Adrenal gland (tissue), 19 donors: ENCODE measurements at regions of chr7 and their contacts with region 1.

Region 1: GRCh38 chr7:101363734-101364374 is 1.2 kb downstream of the COL26A1 start:
- DNase-seq: peak; percentile 69 to 81 (median 75)
- H3K4me3 ChIP-seq: peak overlapping the region in 2 of 4 donors; percentile 43 to 70
- H3K27ac ChIP-seq: peak overlapping the region in 4 of 5 donors; percentile 47 to 70 (median 62)
- H3K4me1 ChIP-seq: peaks cover 0 to 12% of the 10 kb centered on the region in 2 donors
- H3K27me3 ChIP-seq: no peaks in the 10 kb centered on the region
- CTCF ChIP-seq: peak; percentile 66 to 96 (median 86)
- POLR2A ChIP-seq: peak in 1 of 2 donors; percentile 29

Region 2: DNA sequence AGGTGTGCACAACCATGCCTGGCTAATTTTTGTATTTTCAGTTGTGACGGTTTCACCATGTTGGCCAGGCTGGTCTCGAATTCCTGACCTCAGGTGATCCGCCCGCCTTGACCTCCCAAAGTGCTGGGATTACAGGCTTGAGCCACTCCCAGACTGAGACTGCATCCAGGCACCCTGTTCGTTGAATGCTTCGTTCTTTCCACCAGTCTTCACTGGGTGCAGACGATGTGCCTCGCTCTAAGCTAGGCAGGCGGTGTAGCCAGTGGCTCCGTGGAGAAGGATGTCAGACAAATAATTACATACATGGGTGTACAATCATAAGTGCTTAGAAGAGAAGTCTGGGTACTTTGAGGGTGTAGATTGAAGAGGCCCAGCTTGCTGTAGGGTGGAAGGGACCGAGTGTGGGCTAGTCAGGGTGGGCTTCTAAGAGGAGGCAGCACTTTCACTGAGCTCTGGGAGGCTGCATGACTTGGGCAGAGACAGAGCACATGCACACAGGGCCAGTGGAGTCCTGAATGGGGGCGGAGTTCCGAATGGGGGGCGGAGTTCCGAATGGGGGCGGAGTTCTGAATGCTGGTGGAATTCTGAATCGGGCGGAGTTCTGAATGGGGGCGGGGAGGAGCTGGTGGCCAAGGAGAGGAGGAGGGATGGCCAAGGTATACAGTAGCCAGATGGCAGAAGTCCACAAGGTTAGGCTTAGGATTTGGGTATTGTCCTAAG is 73.2 kb after region 1 on chr7:
- intact Hi-C with region 1: loop called in 1 of 2 experiments (anchors 5 kb)
- DNase-seq: peak; percentile 67 to 86 (median 73)
- H3K4me3 ChIP-seq: no peak overlapping the region
- H3K27ac ChIP-seq: no peak overlapping the region
- H3K4me1 ChIP-seq: no peaks in the 10 kb centered on the region
- H3K27me3 ChIP-seq: no peaks in the 10 kb centered on the region
- CTCF ChIP-seq: no peak
- POLR2A ChIP-seq: no peak

Region 3: GRCh38 chr7:101691822-101692384 is 328.0 kb after region 1 on chr7:
- intact Hi-C with region 1: no loop called
- DNase-seq: no peak
- H3K4me3 ChIP-seq: no peak overlapping the region
- H3K27ac ChIP-seq: no peak overlapping the region
- H3K4me1 ChIP-seq: peaks cover 8 to 11% of the 10 kb centered on the region in 2 donors
- H3K27me3 ChIP-seq: no peaks in the 10 kb centered on the region
- CTCF ChIP-seq: no peak
- POLR2A ChIP-seq: no peak

Region 4: DNA sequence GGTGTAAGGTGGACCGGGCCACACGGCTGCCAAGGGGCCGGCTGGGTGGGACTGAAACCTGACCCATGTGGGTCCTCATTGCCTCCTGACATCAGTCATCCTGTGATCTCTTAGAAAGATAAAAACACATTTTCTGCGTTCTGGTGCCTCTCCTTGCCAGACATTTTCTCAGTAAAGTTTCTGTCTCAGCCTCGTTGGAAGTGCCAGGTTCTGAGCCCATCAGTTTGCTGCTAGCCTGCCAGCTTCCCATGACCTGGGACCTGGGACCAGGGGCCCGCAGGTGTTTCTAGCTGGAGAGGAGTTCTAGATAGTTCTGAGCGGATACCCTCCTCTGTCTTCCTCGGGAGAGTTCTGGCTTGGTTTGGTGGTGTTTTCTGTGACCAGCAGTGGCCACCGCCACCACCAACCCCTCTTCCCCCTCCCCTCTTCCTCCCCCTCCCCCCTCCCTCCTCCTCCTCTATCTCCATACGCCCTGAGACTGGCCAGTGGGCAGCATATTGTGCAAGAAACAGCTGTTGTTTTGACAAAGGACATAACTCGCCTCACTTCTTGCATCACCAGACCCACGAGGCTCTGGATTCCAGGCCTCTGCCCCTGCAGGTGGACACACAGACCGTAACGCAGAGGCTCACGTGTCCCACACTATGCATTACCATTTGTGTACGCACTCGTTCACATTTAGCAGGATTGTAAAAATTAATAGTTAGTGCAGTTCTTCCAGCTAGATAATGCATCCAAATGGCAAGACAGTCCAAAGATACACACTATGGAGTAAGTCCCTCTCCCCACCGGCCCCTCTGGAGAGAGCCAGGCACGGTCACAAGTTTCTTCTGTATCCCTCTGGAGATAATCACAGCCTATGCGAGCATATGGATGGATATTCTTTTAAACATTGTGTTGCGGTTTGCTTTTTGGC is 548.2 kb after region 1 on chr7:
- intact Hi-C with region 1: no loop called
- DNase-seq: peak in 6 of 7 donors; percentile 46 to 80 (median 62)
- H3K4me3 ChIP-seq: no peak overlapping the region
- H3K27ac ChIP-seq: peak overlapping the region in 2 of 5 donors; percentile 5 to 60
- H3K4me1 ChIP-seq: no peaks in the 10 kb centered on the region
- H3K27me3 ChIP-seq: no peaks in the 10 kb centered on the region
- CTCF ChIP-seq: peak in 1 of 6 experiments; percentile 10
- POLR2A ChIP-seq: no peak